ENCODE measurements at regions of chr9 and their contacts with region 1.

Region 1: GRCh38 chr9:119556129-119556875 is 187.1 kb upstream of the BRINP1 start:
- DNase-seq: peak; percentile 15
- ATAC-seq: peak; percentile 89
- H3K4me3 ChIP-seq: peak overlapping the region in 1 of 2 experiments; percentile 23; a peak in 2 of 4 replicates
- H3K27ac ChIP-seq: no peak overlapping the region
- H3K4me1 ChIP-seq: no peaks in the 10 kb centered on the region
- H3K27me3 ChIP-seq: no peaks in the 10 kb centered on the region
- CTCF ChIP-seq: peak; percentile 87

Region 2: GRCh38 chr9:119968836-119969707 is 412.8 kb after region 1 on chr9:
- CTCF ChIA-PET with region 1: no interaction called
- POLR2A ChIA-PET with region 1: no interaction called
- in situ Hi-C with region 1: no loop called
- intact Hi-C with region 1: loop called (anchors 5 kb)
- DNase-seq: no peak
- ATAC-seq: peak; percentile 94
- H3K4me3 ChIP-seq: no peak overlapping the region
- H3K27ac ChIP-seq: no peak overlapping the region
- H3K4me1 ChIP-seq: peaks cover 3% of the 10 kb centered on the region
- H3K27me3 ChIP-seq: no peaks in the 10 kb centered on the region
- CTCF ChIP-seq: peak; percentile 92

Region 3: DNA sequence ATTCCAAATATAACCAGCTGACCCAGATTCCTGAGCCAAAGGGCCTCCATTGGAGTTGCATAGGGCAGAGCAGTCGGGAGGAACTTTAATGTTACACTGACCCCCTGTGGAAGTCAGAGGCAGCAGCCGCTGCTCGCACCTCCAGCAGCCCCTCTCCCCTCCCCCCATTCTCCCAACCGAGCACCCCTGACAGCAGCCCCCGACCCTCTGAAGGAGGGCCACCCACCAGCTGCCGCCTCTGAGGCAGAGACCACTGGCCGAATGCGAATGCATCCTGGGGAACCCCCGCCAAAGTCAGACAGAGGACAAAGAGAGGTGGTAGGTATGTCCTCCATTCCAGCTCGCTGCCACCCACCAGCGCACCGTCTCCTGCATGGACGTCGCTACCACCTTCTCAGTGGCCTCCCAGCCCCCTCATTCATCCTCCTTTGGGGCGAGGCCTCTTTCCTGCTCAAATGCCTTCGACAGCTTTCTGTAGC is 792.7 kb after region 1 on chr9:
- CTCF ChIA-PET with region 1: no interaction called
- POLR2A ChIA-PET with region 1: no interaction called
- in situ Hi-C with region 1: no loop called
- intact Hi-C with region 1: loop called (anchors 5 kb)
- DNase-seq: no peak
- ATAC-seq: peak; percentile 83
- H3K4me3 ChIP-seq: no peak overlapping the region
- H3K27ac ChIP-seq: no peak overlapping the region
- H3K4me1 ChIP-seq: no peaks in the 10 kb centered on the region
- H3K27me3 ChIP-seq: no peaks in the 10 kb centered on the region
- CTCF ChIP-seq: peak; percentile 76